ENCODE measurements at regions of chr5 and their contacts with region 1.

Region 1: DNA sequence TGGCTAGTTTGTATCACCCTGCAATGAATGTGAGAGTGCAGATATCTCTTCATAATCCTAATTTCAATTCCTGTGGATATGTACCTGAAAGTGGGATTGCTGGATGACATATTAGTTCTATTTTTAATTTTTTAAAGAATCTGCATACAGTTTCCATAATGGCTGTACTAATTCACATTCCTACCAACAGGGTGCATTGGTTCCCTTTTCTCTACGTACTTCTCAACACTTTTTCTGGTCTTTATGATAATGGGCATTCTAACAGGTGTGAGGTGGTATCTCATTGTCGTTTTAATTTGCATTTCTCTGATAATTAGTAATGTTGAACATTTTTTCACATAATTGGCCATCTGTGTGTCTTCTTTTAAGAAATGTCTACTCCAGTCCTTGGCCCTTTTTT is 927.5 kb downstream of the DTWD2 start:
- DNase-seq: no peak
- H3K4me3 ChIP-seq: no peak overlapping the region
- H3K27ac ChIP-seq: no peak overlapping the region
- H3K4me1 ChIP-seq: no peaks in the 10 kb centered on the region
- H3K27me3 ChIP-seq: no peaks in the 10 kb centered on the region
- CTCF ChIP-seq: no peak
- POLR2A ChIP-seq: no peak

Region 2: DNA sequence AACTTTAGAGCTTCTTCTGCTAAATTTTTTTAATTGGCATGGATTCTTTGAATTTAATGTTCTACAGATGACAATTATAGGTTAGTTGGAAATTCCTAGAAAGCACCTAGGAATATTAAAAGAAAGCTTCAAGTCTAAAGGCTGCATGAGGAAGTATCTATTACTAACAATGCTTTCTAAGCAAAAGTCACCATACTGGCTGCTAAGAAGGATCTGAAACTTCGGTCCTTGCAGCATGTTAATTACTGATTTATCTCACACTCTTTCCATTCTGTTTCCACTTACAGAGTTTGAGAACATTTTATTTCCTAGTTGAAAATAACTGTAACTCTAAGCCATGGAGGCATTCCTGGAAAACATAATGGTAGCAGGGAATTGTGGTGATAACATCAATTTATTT is 1494.6 kb before region 1 on chr5:
- intact Hi-C with region 1: no loop called
- DNase-seq: no peak
- H3K4me3 ChIP-seq: no peak overlapping the region
- H3K27ac ChIP-seq: no peak overlapping the region
- H3K4me1 ChIP-seq: no peaks in the 10 kb centered on the region
- H3K27me3 ChIP-seq: no peaks in the 10 kb centered on the region
- CTCF ChIP-seq: no peak
- POLR2A ChIP-seq: no peak

Region 3: GRCh38 chr5:117318528-117318927 is 742.3 kb before region 1 on chr5:
- intact Hi-C with region 1: no loop called
- DNase-seq: no peak
- H3K4me3 ChIP-seq: no peak overlapping the region
- H3K27ac ChIP-seq: no peak overlapping the region
- H3K4me1 ChIP-seq: no peaks in the 10 kb centered on the region
- H3K27me3 ChIP-seq: no peaks in the 10 kb centered on the region
- CTCF ChIP-seq: no peak
- POLR2A ChIP-seq: no peak

Region 4: DNA sequence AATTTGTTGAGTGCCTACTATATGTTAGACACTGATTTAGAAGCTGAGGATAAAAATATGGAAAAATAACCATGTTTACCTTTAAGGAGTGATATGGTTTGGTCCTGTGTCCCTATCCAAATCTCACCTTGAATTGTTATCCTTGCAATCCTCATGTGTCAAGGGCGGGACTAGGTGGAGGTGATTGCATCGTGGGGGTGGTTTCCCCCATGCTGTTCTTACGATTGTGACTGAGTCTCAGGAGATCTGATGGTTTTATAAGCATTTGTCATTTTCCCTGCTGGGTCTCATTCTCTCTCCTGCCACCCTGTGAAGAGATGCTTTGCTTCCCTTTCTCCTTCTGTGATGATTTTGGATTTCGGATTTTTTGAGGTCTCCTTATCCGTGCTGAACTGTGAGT is 51.1 kb after region 1 on chr5:
- intact Hi-C with region 1: loop called (anchors 2 kb)
- DNase-seq: no peak
- H3K4me3 ChIP-seq: no peak overlapping the region
- H3K27ac ChIP-seq: no peak overlapping the region
- H3K4me1 ChIP-seq: no peaks in the 10 kb centered on the region
- H3K27me3 ChIP-seq: no peaks in the 10 kb centered on the region
- CTCF ChIP-seq: no peak
- POLR2A ChIP-seq: no peak

Measured in breast epithelium (tissue), 4 donors.